Ascending aorta (tissue), 2 donors: ENCODE measurements at regions of chr16 and their contacts with region 1.

Region 1: GRCh38 chr16:57167953-57168352 is 17.9 kb downstream of the PSME3IP1 start:
- DNase-seq: no peak
- H3K4me3 ChIP-seq: no peak overlapping the region
- H3K27ac ChIP-seq: no peak overlapping the region
- H3K4me1 ChIP-seq: no peaks in the 10 kb centered on the region
- H3K27me3 ChIP-seq: no peaks in the 10 kb centered on the region
- CTCF ChIP-seq: peak; percentile 22 to 63 (median 62)

Region 2: GRCh38 chr16:57084257-57084770 is 83.6 kb before region 1 on chr16:
- intact Hi-C with region 1: loop called (anchors 1 kb)
- DNase-seq: peak; percentile 26 to 85
- H3K4me3 ChIP-seq: no peak overlapping the region
- H3K27ac ChIP-seq: peak overlapping the region in 1 of 2 donors; percentile 37
- H3K4me1 ChIP-seq: peaks cover 0 to 6% of the 10 kb centered on the region in 2 donors
- H3K27me3 ChIP-seq: no peaks in the 10 kb centered on the region
- CTCF ChIP-seq: peak; percentile 90 to 98 (median 94)

Region 3: GRCh38 chr16:57185944-57186871 is 18.3 kb after region 1 on chr16 and contains the starts of genes PSME3IP1 and RSPRY1:
- intact Hi-C with region 1: no loop called
- DNase-seq: peak; percentile 98 to 99
- H3K4me3 ChIP-seq: peak within 1 kb of the TSS; percentile 78 to 94
- H3K27ac ChIP-seq: peak within 1 kb of the TSS; percentile 95 to 96
- H3K4me1 ChIP-seq: peaks cover 5 to 33% of the 10 kb centered on the region in 2 donors
- H3K27me3 ChIP-seq: no peaks in the 10 kb centered on the region
- CTCF ChIP-seq: no peak
- total RNA-seq, gene PSME3IP1: 32.6 TPM
- total RNA-seq, gene RSPRY1: 29.3 TPM

Region 4: DNA sequence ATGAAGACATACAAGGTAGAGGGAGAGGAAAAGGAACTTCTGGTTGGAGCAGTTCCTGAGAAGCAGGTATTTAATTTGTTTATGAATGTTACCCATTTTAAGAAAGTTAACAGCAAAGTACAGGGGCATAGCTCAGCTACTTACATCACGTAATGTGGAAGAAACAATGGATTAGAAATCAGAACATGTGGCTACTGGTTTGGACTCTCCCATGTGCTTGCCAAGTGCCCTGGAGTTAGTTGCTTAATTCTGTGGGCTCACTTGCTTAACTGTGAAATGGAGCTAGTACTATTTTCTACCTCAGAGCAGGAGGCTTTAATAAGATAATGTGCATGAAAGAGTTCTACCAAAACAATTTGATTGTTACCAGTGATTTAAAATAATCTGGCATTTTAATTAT is 45.5 kb after region 1 on chr16:
- intact Hi-C with region 1: no loop called
- DNase-seq: no peak
- H3K4me3 ChIP-seq: no peak overlapping the region
- H3K27ac ChIP-seq: no peak overlapping the region
- H3K4me1 ChIP-seq: no peaks in the 10 kb centered on the region
- H3K27me3 ChIP-seq: no peaks in the 10 kb centered on the region
- CTCF ChIP-seq: no peak